ENCODE measurements at regions of chr12 and their contacts with region 1.

Region 1: GRCh38 chr12:124940549-124941527 is 26.4 kb upstream of the UBC start:
- DNase-seq: peak; percentile 80
- H3K4me3 Mint-ChIP-seq: no peak overlapping the region
- H3K27ac Mint-ChIP-seq: no peak overlapping the region
- H3K4me1 Mint-ChIP-seq: no peaks in the 10 kb centered on the region
- H3K27me3 Mint-ChIP-seq: no peaks in the 10 kb centered on the region

Region 2: DNA sequence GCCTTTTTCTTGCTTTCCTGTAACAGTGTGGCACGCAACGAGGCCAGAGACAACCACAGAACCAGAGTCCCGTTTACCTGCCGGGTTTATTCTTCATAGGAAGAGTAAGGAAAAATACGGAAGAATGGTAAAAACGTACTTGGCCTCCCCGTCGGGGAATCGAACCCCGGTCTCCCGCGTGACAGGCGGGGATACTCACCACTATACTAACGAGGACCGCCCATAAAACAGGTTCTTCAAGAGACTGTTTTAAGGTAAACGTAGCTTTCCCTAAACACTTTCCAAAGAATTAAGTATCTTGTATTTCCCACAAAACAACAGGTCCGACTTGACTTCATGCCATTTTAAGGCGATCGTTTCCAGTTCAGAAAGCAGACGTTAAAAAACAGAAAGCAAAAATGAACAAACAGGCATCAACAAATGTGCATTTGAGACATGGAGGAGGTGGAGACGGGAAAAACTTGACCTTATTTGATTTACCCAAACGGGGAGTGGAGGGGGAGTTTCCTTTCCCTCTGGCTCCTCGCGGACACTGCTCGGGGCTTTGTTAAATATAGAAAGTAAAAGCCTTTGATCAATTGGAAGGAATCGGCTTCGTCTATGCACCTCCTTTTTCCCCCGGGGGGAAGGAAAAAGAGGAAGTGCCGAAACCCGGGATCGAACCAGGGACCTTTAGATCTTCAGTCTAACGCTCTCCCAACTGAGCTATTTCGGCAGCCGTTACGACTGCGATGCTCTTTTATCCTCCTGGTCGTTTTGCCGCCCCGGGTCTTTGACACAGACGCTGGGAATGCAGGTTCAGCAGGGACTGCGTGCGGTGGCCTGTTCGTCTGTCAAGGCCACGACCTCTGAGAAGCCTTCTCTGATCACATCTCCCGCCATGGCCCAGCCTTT is 13.4 kb before region 1 on chr12:
- intact Hi-C with region 1: loop called (anchors 1 kb)
- DNase-seq: peak; percentile 88
- H3K4me3 Mint-ChIP-seq: peak overlapping the region; percentile 88
- H3K27ac Mint-ChIP-seq: peak overlapping the region; percentile 98
- H3K4me1 Mint-ChIP-seq: peaks cover 42% of the 10 kb centered on the region
- H3K27me3 Mint-ChIP-seq: peaks cover 9% of the 10 kb centered on the region

Region 3: DNA sequence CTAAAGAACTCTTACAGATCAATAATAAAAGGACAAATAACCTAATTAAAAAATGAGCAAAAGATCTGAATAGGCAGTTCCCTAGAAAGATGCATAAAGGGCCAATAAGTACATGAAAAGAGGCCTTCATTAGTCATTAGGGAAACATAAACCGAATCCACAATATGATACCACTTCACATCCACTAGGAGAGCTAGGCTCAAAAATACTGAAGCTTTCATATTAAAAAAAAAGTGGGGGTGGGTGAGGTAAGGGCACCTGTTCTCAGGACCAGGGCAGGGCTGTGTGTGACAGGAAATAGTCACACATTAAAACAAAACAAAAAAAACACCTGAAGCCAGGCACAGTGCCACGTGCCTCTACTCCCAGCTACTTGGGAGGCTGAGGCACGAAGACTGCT is 20.9 kb after region 1 on chr12:
- intact Hi-C with region 1: no loop called
- DNase-seq: no peak
- H3K4me3 Mint-ChIP-seq: no peak overlapping the region
- H3K27ac Mint-ChIP-seq: no peak overlapping the region
- H3K4me1 Mint-ChIP-seq: no peaks in the 10 kb centered on the region
- H3K27me3 Mint-ChIP-seq: no peaks in the 10 kb centered on the region

Region 4: DNA sequence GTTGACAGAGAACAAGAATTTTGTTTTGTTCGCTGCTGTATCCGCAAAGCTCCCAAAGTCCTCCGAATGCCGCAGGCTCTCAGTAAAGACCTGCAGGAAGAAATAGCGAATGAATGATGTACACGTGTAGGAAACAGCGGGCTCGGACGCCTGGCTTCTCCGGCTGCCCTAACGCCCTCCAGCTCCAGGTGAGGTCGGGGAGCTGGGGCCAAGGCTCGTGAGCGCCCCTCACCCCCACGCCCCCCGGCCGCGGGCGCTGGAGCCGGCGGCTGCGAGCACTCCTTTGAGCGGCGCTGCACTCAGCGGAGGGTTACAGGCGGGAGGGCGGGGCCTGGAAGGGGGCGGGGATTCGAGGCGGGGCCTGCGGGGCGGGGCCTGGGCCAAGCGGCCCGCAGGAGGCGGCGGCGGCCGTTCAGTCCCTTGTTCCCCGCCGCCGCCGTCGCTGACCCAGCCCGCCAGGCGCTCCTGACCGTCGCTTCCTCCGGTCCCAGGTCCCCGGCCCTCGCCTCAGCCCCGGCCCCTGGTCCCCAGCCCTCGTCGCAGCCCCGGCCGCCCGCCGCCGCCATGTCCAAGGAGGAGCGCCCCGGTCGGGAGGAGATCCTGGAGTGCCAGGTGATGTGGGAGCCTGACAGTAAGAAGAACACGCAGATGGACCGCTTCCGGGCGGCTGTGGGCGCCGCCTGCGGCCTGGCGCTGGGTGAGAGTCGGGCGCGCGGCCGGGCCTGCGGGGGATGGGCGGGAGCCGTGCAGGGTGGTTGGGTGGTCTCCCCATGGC is 124.4 kb after region 1 on chr12 and contains the start of gene AACS:
- intact Hi-C with region 1: loop called (anchors 1 kb)
- DNase-seq: peak; percentile 58
- H3K4me3 Mint-ChIP-seq: peak within 1 kb of the TSS; percentile 84
- H3K27ac Mint-ChIP-seq: peak within 1 kb of the TSS; percentile 40
- H3K4me1 Mint-ChIP-seq: peaks cover 17% of the 10 kb centered on the region
- H3K27me3 Mint-ChIP-seq: peaks cover 7% of the 10 kb centered on the region
- total RNA-seq, gene AACS: 26.7 and 27.8 TPM in 2 replicates

Region 5: GRCh38 chr12:125076103-125076502 is 135.3 kb after region 1 on chr12:
- intact Hi-C with region 1: no loop called
- DNase-seq: no peak
- H3K4me3 Mint-ChIP-seq: no peak overlapping the region
- H3K27ac Mint-ChIP-seq: no peak overlapping the region
- H3K4me1 Mint-ChIP-seq: peaks cover 5% of the 10 kb centered on the region
- H3K27me3 Mint-ChIP-seq: no peaks in the 10 kb centered on the region

Region 6: DNA sequence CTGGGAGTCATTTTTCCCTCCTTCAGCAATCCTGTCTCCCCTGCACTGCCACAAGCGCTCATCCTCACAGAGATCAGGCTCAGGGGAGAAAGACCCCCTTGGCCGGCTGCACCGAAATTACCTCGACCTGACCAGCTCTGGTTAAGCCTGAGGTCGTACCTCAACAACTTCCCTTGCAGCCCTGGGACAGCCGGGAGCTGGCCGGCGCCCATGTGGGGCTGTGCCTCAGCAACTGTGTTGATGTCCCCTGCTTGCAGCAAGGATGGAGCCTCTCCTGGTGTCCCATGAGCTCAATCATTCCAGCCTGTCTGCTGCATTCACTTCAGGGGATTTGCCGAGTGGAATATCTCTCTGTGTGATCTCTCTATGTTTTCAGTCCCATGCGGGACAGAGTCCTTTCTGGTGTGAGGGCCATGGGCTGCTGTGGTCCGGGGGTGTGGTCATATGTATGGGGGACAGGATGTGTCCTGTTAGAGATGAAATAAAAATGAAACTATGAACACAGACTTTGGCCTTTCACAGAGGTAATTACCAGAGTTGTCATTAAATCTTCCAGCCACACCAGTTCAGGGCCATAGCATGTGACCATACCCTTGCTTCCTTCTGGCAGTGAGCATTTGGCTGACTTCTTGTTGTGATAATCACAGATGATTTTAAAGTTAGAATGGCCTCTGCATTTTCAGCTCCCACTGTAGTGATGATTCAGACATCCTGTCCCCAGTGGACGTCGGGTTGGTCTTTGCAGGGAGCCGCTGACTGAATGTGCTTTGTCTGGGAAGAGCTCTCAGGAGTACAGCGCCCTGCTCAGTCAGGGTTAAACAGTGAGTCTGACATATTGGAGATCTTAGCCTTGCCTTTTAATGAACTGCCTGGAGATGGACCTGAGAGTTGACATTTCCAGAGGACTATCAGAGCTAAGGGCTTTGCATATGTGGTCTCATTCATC is 530.3 kb after region 1 on chr12:
- intact Hi-C with region 1: no loop called
- DNase-seq: no peak
- H3K4me3 Mint-ChIP-seq: no peak overlapping the region
- H3K27ac Mint-ChIP-seq: no peak overlapping the region
- H3K4me1 Mint-ChIP-seq: no peaks in the 10 kb centered on the region
- H3K27me3 Mint-ChIP-seq: peaks cover 5% of the 10 kb centered on the region